IMR-90 (cell line): ENCODE measurements at regions of chrX and their contacts with region 1.

Region 1: GRCh38 chrX:8803326-8803725 is 2.1 kb upstream of the FAM9A start:
- DNase-seq: no peak
- ATAC-seq: no peak
- H3K4me3 ChIP-seq: no peak overlapping the region
- H3K27ac ChIP-seq: no peak overlapping the region
- H3K4me1 ChIP-seq: no peaks in the 10 kb centered on the region
- H3K27me3 ChIP-seq: peaks cover 2% of the 10 kb centered on the region; the same call in 1 of the 2 replicates
- CTCF ChIP-seq: no peak
- POLR2A ChIP-seq: no peak
- RAD21 ChIP-seq: no peak

Region 2: DNA sequence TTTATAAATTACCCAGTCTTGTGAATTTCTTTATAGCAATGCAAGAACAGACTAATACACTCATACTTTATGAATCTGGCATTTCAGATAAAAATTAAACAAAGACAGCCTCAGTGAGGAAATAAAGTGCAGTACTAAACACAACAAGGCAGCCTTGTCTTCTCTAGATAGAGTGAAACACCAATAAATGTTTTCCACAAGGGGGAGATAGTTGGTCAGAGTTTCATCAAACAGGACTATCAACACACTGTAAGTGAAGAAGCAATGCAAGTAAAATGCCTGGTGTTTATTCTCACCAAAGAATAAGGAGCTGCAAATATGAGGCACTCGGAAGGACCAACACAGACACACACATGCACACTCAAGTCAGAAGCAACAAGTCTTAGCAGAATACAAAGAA is 167.8 kb after region 1 on chrX:
- CTCF ChIA-PET with region 1: no interaction called
- POLR2A ChIA-PET with region 1: no interaction called
- dilution Hi-C with region 1: no loop called
- in situ Hi-C with region 1: no loop called
- intact Hi-C with region 1: no loop called
- DNase-seq: peak; percentile 67
- ATAC-seq: peak; percentile 92
- H3K4me3 ChIP-seq: no peak overlapping the region
- H3K27ac ChIP-seq: no peak overlapping the region
- H3K4me1 ChIP-seq: no peaks in the 10 kb centered on the region
- H3K27me3 ChIP-seq: no peaks in the 10 kb centered on the region
- CTCF ChIP-seq: peak; percentile 51
- POLR2A ChIP-seq: no peak
- RAD21 ChIP-seq: peak; percentile 69

Region 3: DNA sequence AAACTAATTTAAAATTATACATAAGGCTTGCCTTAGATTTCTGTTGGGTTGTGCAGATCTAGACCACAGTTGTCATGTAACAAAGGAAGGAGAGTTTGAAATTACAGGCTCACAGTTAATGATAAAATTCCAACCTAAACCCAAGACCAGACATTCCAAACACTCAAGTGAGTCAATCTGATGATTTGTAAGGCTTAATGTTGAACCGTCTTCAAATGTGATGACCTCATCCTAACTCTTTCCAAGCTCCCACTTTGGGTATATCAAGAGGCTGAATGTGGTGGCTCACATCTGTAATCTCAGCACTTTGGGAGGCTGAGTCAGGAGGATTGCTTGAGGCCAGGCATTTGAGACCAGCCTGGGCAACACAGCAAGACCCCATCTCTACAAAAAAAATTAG is 810.7 kb after region 1 on chrX:
- CTCF ChIA-PET with region 1: no interaction called
- POLR2A ChIA-PET with region 1: interaction called, 10 read pairs
- dilution Hi-C with region 1: no loop called
- in situ Hi-C with region 1: no loop called
- intact Hi-C with region 1: no loop called
- DNase-seq: peak; percentile 84
- ATAC-seq: peak; percentile 42
- H3K4me3 ChIP-seq: no peak overlapping the region
- H3K27ac ChIP-seq: no peak overlapping the region
- H3K4me1 ChIP-seq: peaks cover 2% of the 10 kb centered on the region; the same call in 1 of the 2 replicates
- H3K27me3 ChIP-seq: no peaks in the 10 kb centered on the region
- CTCF ChIP-seq: no peak
- POLR2A ChIP-seq: no peak
- RAD21 ChIP-seq: no peak

Region 4: GRCh38 chrX:9859711-9860555 is 1056.6 kb after region 1 on chrX:
- CTCF ChIA-PET with region 1: no interaction called
- POLR2A ChIA-PET with region 1: no interaction called
- dilution Hi-C with region 1: no loop called
- in situ Hi-C with region 1: no loop called
- intact Hi-C with region 1: no loop called
- DNase-seq: peak; percentile 83
- ATAC-seq: peak; percentile 59
- H3K4me3 ChIP-seq: no peak overlapping the region
- H3K27ac ChIP-seq: no peak overlapping the region
- H3K4me1 ChIP-seq: peaks cover 6% of the 10 kb centered on the region
- H3K27me3 ChIP-seq: no peaks in the 10 kb centered on the region
- CTCF ChIP-seq: no peak
- POLR2A ChIP-seq: no peak
- RAD21 ChIP-seq: no peak